ENCODE measurements at regions of chr6 and their contacts with region 1.

Region 1: GRCh38 chr6:136786658-136787057 is 5.6 kb downstream of the MAP3K5 start:
- DNase-seq: no peak
- H3K27ac ChIP-seq: no peak overlapping the region
- CTCF ChIP-seq: no peak

Region 2: DNA sequence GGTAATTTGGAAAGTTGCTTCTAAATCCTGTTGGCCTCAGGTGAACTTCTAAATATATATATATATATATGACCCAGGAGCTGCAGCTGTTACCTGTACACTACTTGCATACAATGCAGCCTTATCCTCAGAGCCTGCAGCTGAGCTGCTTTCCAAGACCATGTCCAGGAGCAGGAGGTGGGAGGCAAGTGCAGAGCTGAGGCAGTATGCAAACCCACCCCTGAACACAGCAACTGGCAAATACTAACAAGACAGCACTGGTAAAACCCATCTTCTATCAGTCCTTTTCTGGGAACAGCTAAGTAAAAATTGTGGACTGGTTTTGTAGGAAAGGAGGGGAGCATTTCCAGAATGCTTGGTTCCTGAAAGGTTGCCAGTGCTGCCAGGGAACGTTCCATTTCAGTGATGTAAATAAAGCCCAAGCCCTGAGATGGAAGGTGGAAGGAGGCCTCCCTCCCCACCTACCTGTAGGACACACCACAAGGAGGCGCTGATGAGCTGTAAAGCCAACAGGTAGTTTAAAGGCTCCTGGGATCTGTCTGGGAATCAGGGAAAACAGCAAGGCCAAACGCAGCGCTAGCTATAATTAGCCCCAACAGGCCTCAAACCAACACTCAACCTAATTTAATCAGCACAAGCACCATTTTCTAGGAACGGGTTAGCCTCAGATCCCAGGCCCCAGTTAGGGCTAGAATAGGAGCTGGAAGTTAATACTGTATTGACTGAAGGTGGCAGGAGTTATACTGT is 142.6 kb before region 1 on chr6:
- CTCF ChIA-PET with region 1: interaction called, 117 read pairs
- POLR2A ChIA-PET with region 1: interaction called, 5 read pairs
- DNase-seq: peak; percentile 85
- H3K27ac ChIP-seq: peak overlapping the region; percentile 25
- CTCF ChIP-seq: peak; percentile 85

Region 3: DNA sequence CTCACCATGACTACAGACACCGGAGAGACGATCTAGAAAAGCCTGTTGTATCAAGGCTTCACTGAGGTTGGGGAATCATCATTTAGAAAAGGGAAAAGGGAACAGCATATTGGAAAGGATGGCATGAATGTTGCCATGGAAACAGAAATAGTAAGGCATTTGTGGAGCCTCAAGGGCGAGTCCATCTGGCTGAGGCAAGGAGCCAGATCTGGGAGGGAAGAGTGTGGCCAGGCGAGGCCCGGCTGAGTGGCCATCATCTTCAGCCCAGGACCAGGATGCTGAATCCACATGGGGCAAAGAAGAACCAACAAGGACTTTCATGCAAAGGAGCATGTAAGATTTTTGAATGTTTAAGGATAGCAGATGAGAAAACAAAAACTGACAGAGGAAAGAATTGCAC is 80.2 kb before region 1 on chr6:
- CTCF ChIA-PET with region 1: no interaction called
- POLR2A ChIA-PET with region 1: no interaction called
- DNase-seq: no peak
- H3K27ac ChIP-seq: no peak overlapping the region
- CTCF ChIP-seq: no peak

Region 4: DNA sequence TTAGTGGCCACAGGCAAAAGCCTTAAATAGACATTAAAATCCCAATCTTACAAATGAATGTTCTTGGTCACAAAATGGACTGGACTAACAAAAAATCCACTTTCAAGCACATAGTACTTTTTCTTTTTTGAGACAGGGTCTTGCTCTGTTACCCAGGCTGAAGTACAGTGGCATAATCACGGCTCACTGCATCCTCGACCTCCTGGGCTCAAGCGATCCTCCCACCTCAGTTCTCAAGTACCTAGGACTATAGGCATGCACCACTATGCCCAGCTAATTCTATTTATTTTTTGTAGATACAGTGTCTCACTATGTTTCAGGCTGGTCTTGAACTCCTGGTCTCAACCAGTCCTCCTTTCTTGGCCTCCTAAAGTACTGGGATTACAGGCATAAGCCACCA is 53.8 kb before region 1 on chr6:
- CTCF ChIA-PET with region 1: no interaction called
- POLR2A ChIA-PET with region 1: no interaction called
- DNase-seq: no peak
- H3K27ac ChIP-seq: no peak overlapping the region
- CTCF ChIP-seq: no peak